ENCODE measurements at regions of chrX and their contacts with region 1.

Region 1: DNA sequence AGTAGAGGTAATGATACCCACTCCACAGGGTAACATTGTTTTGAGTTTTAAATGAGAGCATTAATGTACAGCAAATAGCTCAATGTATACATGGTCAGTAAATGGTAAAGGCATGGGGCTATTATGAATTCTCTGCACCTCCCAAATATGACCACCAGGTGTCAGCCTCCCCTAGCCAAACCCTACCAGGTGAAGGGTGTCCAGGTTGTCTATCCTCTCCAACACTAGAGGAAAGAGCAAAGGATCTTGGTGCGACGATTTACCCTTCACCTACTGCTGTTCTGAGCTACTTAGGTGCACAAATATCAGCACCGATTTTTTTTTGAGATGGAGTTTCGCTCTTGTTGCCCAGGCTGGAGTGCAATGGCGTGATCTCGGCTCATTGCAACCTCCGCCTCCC is 26.5 kb upstream of the XIAP start:
- DNase-seq: peak; percentile 62 to 68
- H3K4me3 ChIP-seq: no peak overlapping the region
- H3K27ac ChIP-seq: no peak overlapping the region
- H3K4me1 ChIP-seq: peaks cover 22% of the 10 kb centered on the region
- H3K27me3 ChIP-seq: no peaks in the 10 kb centered on the region
- CTCF ChIP-seq: peak; percentile 92

Region 2: DNA sequence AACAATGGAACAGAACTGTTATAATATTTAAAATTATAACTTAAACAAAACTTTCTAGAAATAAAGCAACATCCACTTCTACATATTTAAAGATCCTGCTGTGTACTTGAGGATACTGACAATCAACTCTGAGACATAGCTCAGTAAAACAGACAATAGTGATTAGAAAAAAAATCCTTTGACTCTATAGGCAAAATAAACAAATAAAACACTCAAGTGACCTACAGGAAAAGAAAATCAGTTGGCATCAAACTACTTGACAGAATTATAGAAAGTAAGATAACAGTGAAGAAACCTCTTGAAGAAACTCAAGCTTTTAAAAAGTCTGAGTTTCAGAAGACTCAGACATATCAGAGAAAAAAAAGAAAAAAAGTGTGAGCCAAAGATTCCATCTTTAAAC is 44.6 kb before region 1 on chrX:
- CTCF ChIA-PET with region 1: no interaction called
- POLR2A ChIA-PET with region 1: no interaction called
- intact Hi-C with region 1: loop called (anchors 5 kb)
- DNase-seq: no peak
- H3K4me3 ChIP-seq: no peak overlapping the region
- H3K27ac ChIP-seq: peak overlapping the region; percentile 26; the same call in 1 of the 2 replicates
- H3K4me1 ChIP-seq: peaks cover 13% of the 10 kb centered on the region
- H3K27me3 ChIP-seq: no peaks in the 10 kb centered on the region
- CTCF ChIP-seq: no peak

Region 3: DNA sequence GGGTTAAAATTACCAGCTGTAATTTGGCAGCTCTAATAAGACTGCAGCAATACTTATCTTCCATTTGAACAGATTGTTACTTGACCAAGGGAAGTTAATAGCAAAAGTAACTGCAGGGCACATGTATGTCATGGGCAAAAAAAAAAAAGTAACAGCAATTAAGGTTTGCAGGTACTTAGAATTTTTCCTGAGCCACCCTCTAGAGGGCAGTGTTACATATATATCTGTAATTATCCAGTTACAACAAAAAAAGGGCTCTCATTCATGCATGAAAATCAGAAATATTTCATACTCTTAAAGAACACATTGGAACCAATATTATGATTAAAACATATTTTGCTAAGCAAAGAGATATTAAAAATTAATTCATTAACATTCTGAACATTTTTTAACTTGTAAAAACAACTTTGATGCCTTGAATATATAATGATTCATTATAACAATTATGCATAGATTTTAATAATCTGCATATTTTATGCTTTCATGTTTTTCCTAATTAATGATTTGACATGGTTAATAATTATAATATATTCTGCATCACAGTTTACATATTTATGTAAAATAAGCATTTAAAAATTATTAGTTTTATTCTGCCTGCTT is 51.5 kb after region 1 on chrX:
- CTCF ChIA-PET with region 1: interaction called, 9 read pairs
- POLR2A ChIA-PET with region 1: no interaction called
- intact Hi-C with region 1: loop called (anchors 1 kb)
- DNase-seq: peak; percentile 21 to 66
- H3K4me3 ChIP-seq: no peak overlapping the region
- H3K27ac ChIP-seq: no peak overlapping the region
- H3K4me1 ChIP-seq: peaks cover 38% of the 10 kb centered on the region
- H3K27me3 ChIP-seq: no peaks in the 10 kb centered on the region
- CTCF ChIP-seq: peak; percentile 79

Region 4: DNA sequence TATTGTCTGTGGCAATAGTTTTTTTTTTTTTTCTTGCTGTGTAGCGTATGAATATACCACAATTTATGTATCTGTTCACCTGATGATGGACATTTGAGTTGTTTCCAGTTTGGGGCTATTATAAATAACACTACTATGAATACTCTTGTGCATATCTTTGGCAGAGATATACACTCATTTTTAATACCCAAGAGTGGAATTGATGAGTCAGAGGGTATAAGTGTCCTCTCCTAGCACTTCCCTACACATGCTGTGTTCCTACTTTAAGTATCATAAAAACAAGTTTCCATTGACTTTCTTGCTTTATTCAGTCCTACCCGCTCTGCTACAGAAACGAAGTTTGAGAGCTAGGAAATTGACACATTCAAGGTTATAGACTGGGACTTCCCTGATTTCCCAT is 66.3 kb after region 1 on chrX:
- CTCF ChIA-PET with region 1: no interaction called
- POLR2A ChIA-PET with region 1: no interaction called
- intact Hi-C with region 1: no loop called
- DNase-seq: no peak
- H3K4me3 ChIP-seq: no peak overlapping the region
- H3K27ac ChIP-seq: no peak overlapping the region
- H3K4me1 ChIP-seq: no peaks in the 10 kb centered on the region
- H3K27me3 ChIP-seq: no peaks in the 10 kb centered on the region
- CTCF ChIP-seq: no peak

Region 5: DNA sequence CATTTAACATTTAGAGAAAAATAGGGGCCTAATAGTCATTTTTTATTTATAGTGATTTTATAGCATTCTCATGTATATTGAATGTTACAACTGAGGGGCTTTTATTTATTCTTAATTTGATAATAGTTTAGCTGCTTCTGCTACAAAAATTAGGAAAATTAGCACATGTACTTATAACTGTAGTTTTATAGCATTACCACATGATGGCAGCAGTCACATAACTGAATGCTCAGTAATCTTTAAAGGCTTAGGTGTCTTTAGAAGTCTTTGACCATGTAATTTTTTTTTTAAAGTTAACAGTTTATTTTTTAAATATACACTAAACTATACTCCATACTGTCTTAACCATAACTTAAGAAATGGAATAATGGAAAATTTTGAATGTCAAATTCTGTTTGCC is 264.7 kb after region 1 on chrX:
- CTCF ChIA-PET with region 1: interaction called, 12 read pairs
- POLR2A ChIA-PET with region 1: no interaction called
- intact Hi-C with region 1: no loop called
- DNase-seq: no peak
- H3K4me3 ChIP-seq: no peak overlapping the region
- H3K27ac ChIP-seq: no peak overlapping the region
- H3K4me1 ChIP-seq: no peaks in the 10 kb centered on the region
- H3K27me3 ChIP-seq: no peaks in the 10 kb centered on the region
- CTCF ChIP-seq: peak; percentile 72

Region 6: DNA sequence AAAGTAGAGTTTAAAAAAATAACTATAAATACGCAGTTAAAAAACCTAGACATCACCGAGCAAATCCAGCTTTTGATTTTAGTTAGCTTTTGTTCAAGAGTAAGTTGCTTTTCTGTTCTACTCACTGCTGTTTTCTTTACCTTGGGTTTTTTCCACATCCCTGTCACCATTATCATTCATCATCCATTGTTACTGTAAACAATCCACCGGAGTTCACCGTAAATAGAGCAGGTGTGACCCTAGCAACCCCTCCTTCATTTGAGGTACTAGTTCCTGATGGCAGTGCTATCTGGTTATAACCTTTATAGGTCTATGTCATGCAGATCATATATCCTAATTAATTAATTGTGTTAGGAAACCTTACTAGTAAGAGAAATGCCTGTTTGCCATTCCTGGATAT is 456.1 kb after region 1 on chrX:
- CTCF ChIA-PET with region 1: no interaction called
- POLR2A ChIA-PET with region 1: no interaction called
- intact Hi-C with region 1: no loop called
- DNase-seq: no peak
- H3K4me3 ChIP-seq: no peak overlapping the region
- H3K27ac ChIP-seq: no peak overlapping the region
- H3K4me1 ChIP-seq: no peaks in the 10 kb centered on the region
- H3K27me3 ChIP-seq: no peaks in the 10 kb centered on the region
- CTCF ChIP-seq: no peak

Measured in PC-9 (cell line).